Common myeloid progenitor, CD34-positive (primary cell): ENCODE measurements at regions of chr14 and their contacts with region 1.

Region 1: DNA sequence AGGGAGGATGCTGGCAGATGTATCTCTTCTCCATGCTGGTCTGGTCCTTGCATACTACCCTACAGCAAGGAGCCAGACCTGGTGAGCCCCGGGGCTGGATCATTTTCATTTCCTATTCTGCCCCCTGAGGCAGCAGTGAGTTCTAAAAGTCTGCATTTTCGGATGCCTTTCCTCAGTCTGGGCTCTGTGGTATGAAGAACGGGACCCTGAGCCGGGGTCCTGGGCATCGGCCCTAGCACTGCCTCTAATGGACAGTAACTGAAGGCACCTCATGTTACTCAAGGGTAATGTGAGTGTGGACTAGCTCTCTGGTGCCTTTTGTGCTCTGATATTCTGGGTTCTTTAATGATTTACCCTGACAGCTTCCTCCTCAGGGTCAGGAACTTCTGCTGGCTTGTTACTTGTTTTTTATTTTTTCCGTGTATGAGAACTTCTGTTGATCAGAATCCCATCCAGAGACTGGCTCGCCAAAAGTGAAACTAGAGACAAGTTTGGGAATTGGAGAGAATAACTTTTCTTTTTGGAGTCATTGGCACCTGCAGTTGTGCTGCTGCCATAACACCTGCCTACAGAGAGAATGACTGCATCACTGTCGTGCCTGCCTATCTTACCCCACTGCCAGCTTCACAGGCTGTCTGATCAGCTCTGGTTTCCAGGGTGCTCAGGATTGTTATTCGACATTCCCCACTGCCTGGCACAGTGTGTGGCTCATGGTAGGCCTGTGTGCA is 62.3 kb downstream of the SUSD6 start:
- DNase-seq: peak; percentile 38 to 75 (median 66)
- H3K4me3 ChIP-seq: peak overlapping the region in 5 of 7 experiments; percentile 2 to 57 (median 31)
- H3K27ac ChIP-seq: peak overlapping the region in 1 of 2 experiments; percentile 72
- H3K4me1 ChIP-seq: peaks cover 12 to 43% (median 41%) of the 10 kb centered on the region in 4 experiments
- H3K27me3 ChIP-seq: no peaks in the 10 kb centered on the region

Region 2: GRCh38 chr14:69574263-69574953 is 99.3 kb before region 1 on chr14 and contains the start of gene CCDC177:
- CTCF ChIA-PET with region 1: no interaction called
- POLR2A ChIA-PET with region 1: no interaction called
- DNase-seq: peak; percentile 58 to 79 (median 77)
- H3K4me3 ChIP-seq: peak within 1 kb of the TSS in 5 of 7 experiments; percentile 8 to 64 (median 55)
- H3K27ac ChIP-seq: no peak within 1 kb of the TSS
- H3K4me1 ChIP-seq: peaks cover 0 to 35% (median 24%) of the 10 kb centered on the region in 4 experiments
- H3K27me3 ChIP-seq: peaks cover 0 to 77% (median 36%) of the 10 kb centered on the region in 5 experiments

Region 3: GRCh38 chr14:69629225-69630127 is 44.3 kb before region 1 on chr14:
- CTCF ChIA-PET with region 1: interaction called, 12 read pairs
- POLR2A ChIA-PET with region 1: no interaction called
- DNase-seq: no peak
- H3K4me3 ChIP-seq: no peak overlapping the region
- H3K27ac ChIP-seq: no peak overlapping the region
- H3K4me1 ChIP-seq: peaks cover 32 to 84% (median 68%) of the 10 kb centered on the region in 4 experiments
- H3K27me3 ChIP-seq: no peaks in the 10 kb centered on the region

Region 4: DNA sequence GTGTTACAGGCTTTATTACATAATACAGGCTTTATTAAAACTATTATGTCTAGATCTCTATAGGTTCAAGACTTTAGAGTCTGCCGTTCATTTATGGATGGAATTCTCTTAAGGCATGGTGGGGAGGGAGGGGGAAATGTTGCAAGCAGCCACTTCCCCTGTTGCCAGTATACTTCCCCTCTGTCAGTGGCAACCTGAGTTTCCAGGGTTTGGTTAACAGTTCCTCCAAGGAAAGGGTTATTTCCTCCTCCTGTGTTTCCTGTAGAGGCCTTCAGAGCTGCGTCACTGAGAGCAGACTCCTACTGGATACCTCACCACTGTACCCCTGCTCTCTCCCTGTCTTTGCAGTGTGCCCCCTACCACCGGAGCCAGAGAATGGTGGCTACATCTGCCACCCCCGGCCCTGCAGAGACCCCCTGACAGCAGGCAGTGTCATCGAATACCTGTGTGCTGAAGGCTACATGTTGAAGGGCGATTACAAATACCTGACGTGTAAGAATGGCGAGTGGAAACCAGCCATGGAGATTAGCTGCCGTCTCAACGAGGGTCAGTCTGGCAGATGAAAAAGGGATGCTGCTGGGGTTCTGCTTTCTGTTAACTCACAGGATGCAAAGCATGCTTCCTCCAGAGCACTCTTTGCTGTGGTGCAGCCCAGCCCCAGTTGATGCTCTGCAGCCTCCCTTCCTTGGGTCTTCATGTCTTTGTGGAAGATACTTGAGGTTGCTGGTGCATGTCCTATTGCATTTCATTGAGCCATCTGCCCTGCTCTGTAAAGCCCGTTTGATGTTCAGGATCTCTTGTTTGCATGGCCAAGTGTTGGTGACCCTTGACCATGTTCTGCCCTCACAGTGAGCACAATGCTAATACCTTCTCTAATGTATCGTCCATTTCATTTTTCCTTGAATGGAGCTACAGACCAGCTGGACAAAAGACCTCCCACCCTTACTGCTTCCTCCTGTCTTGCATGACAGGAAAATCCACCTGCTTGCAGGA is 29.6 kb after region 1 on chr14:
- CTCF ChIA-PET with region 1: interaction called, 10 read pairs
- POLR2A ChIA-PET with region 1: no interaction called
- DNase-seq: peak; percentile 69 to 84 (median 79)
- H3K4me3 ChIP-seq: peak overlapping the region in 4 of 7 experiments; percentile 23 to 56 (median 38)
- H3K27ac ChIP-seq: peak overlapping the region; percentile 71 to 90
- H3K4me1 ChIP-seq: peaks cover 37 to 87% (median 75%) of the 10 kb centered on the region in 4 experiments
- H3K27me3 ChIP-seq: no peaks in the 10 kb centered on the region

Region 5: DNA sequence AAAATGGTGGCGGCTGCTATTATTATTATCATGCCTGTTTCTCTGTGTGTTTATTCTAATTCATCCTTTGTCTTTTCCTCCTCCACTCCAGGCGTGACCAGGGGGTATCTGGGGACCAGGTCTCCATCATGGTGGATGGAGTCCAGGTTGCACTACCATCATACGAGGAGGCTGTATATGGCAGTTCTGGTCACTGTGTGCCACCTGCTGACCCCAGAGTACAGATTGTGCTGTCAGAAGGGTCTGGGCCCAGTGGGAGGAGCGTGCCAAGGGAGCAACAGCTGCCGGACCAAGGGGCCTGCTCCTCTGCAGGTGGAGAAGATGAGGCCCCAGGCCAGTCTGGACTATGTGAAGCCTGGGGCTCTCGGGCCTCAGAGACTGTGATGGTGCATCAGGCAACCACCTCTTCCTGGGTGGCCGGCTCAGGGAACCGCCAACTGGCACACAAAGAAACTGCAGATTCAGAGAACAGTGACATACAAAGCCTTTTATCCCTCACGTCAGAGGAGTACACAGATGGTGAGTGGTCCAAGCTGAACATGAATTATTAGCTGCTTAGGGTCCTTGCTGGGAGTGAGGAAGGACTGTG is 34.9 kb after region 1 on chr14:
- CTCF ChIA-PET with region 1: interaction called, 21 read pairs
- POLR2A ChIA-PET with region 1: no interaction called
- DNase-seq: no peak
- H3K4me3 ChIP-seq: no peak overlapping the region
- H3K27ac ChIP-seq: no peak overlapping the region
- H3K4me1 ChIP-seq: peaks cover 11 to 76% (median 62%) of the 10 kb centered on the region in 4 experiments
- H3K27me3 ChIP-seq: no peaks in the 10 kb centered on the region

Region 6: DNA sequence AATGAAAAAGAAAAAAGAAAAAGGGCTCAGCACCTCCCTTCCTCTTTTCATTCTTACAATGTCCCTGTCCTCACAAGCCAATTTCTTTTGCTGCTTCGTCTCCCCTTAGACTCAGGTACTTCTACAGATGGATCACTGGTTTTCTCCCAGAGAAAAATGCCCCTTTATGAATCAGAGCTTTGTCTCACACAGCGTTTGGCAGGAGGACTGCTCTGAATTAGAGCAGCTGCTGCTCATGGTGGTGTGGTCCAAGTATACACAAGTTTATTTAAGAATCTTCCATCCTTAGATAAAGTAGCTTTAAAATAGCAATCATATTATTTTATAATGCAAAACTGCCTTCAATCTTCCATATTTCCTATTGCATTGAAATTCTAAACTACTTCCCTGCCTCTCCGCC is 434.7 kb after region 1 on chr14:
- CTCF ChIA-PET with region 1: no interaction called
- POLR2A ChIA-PET with region 1: no interaction called
- DNase-seq: no peak
- H3K4me3 ChIP-seq: no peak overlapping the region
- H3K27ac ChIP-seq: no peak overlapping the region
- H3K4me1 ChIP-seq: no peaks in the 10 kb centered on the region
- H3K27me3 ChIP-seq: no peaks in the 10 kb centered on the region